ENCODE measurements at regions of chr4 and their contacts with region 1.

Region 1: DNA sequence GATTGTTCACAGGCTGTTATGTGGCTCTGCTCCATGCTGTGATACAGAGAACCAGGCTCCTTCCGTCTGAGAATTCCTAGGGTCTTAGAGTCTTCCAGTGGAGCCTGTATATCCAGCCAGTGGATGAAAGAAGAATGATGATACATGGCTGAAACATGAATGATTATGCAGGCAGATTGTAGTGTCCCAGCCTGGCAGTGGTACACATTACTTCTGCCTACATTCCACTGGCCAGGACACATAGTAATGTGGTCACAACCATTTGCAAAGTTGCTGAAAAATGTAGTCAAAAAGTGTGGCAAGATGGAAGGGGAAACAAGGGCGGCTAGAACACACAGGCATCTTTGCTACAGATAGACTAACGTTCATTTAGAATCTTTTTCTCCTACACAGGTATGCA is 4.5 kb upstream of the GBA3 start:
- DNase-seq: no peak
- H3K4me3 ChIP-seq: no peak overlapping the region
- H3K27ac ChIP-seq: no peak overlapping the region
- H3K4me1 ChIP-seq: no peaks in the 10 kb centered on the region
- H3K27me3 ChIP-seq: no peaks in the 10 kb centered on the region
- CTCF ChIP-seq: no peak
- EP300 ChIP-seq: no peak
- POLR2A ChIP-seq: no peak

Region 2: DNA sequence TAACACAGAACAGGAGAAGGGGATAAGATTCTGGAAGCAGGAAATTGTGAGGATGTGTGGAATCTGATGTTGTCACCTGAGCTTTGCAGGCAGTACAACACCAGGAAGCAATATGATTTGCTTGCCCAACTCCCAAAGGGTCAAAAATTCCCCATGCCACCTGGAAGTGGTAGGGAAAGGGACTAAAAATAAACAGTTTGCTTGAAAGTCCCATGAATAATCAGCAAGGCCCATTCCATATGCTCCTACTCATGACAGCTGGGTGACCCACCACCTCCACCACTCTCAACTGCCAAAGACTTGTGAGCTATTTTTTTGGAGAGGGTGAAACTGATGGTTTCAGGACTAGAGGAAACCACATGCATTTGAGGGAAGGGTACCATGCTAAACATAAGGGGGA is 908.1 kb before region 1 on chr4:
- intact Hi-C with region 1: loop called in 1 of 4 experiments (anchors 10 kb)
- DNase-seq: no peak
- H3K4me3 ChIP-seq: no peak overlapping the region
- H3K27ac ChIP-seq: no peak overlapping the region
- H3K4me1 ChIP-seq: no peaks in the 10 kb centered on the region
- H3K27me3 ChIP-seq: no peaks in the 10 kb centered on the region
- CTCF ChIP-seq: no peak
- EP300 ChIP-seq: no peak
- POLR2A ChIP-seq: no peak

Region 3: GRCh38 chr4:22014222-22014741 is 674.0 kb before region 1 on chr4:
- intact Hi-C with region 1: no loop called
- DNase-seq: no peak
- H3K4me3 ChIP-seq: no peak overlapping the region
- H3K27ac ChIP-seq: no peak overlapping the region
- H3K4me1 ChIP-seq: no peaks in the 10 kb centered on the region
- H3K27me3 ChIP-seq: no peaks in the 10 kb centered on the region
- CTCF ChIP-seq: no peak
- EP300 ChIP-seq: no peak
- POLR2A ChIP-seq: no peak

Region 4: DNA sequence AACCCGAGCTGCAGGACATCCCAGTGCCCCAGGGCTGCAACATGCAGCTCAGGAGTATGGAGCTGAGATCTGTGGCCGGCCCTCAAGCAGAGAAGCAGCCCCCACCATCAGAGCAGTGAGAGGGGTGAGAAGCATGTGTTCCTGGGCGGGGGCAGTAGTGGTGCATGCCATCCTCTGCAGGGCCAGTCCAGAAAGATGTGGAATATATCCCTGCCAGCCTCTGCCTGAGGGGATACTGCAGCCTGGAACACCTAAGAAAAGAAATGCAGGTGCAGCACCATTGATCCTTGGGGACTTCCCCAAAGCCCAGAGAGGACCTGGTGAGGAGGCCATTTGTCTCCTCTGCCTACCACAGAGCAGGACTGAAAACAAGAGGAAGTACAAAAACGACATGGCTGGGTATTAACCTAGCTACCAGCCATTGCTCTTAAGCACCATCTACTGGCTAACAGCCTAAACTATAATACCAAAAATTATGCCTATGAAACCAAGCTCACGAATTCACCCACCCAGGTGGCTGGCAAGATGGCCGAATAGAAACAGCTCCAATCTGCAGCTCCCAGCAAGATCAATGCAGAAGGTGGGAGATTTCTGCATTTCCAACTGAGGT is 331.1 kb before region 1 on chr4:
- intact Hi-C with region 1: no loop called
- DNase-seq: no peak
- H3K4me3 ChIP-seq: no peak overlapping the region
- H3K27ac ChIP-seq: no peak overlapping the region
- H3K4me1 ChIP-seq: no peaks in the 10 kb centered on the region
- H3K27me3 ChIP-seq: no peaks in the 10 kb centered on the region
- CTCF ChIP-seq: no peak
- EP300 ChIP-seq: no peak
- POLR2A ChIP-seq: no peak

Region 5: DNA sequence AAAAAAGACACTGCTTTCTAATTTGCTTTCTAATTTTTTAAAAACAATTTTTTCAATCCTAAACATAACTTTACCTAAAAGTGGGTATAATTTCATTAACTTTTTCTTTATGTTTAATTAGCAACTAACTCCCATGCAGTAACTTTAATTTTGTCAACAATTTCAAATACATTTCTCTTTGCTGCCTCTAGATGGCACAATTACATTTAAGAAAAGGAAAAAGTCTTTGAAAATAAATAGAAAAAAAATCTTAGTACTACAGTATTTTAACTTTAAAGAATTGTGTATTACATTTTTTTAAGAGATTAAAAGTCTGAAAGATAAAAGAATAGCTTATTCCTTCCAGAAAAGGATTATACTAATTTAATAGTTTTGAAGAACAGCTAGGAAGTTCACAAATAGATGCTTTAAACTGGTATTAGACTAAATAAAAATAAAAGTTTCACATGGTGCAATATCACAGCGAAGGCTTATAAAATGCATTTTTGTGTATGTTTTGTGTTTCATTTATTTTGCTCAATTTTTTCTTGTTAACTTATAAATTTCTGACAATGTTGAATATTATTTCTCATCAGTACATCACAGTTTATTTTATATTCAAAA is 277.5 kb before region 1 on chr4:
- intact Hi-C with region 1: loop called (anchors 2 to 10 kb)
- DNase-seq: no peak
- H3K4me3 ChIP-seq: no peak overlapping the region
- H3K27ac ChIP-seq: no peak overlapping the region
- H3K4me1 ChIP-seq: no peaks in the 10 kb centered on the region
- H3K27me3 ChIP-seq: no peaks in the 10 kb centered on the region
- CTCF ChIP-seq: peak in 1 of 3 donors; percentile 7
- EP300 ChIP-seq: no peak
- POLR2A ChIP-seq: no peak

Region 6: DNA sequence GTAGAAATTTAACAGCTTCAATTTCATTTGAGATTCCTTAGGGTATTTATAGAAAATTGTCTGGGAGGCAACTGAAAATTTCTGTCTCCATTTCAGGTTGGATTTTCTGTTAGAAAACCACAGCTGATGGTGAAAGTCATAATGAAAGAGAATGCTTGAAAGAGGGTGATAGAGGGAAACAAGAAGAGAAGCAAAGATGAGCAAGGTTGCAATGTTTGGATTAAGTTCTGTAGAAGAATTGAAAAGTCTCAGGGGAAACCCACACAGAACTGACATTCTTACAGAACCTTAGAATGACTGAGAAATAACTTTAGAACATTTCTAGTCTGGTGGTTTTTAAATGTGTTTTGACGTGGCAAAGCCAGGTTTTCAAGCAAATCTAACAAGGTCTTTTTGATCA is 19.2 kb after region 1 on chr4:
- intact Hi-C with region 1: no loop called
- DNase-seq: no peak
- H3K4me3 ChIP-seq: no peak overlapping the region
- H3K27ac ChIP-seq: no peak overlapping the region
- H3K4me1 ChIP-seq: no peaks in the 10 kb centered on the region
- H3K27me3 ChIP-seq: no peaks in the 10 kb centered on the region
- CTCF ChIP-seq: no peak
- EP300 ChIP-seq: no peak
- POLR2A ChIP-seq: no peak